Psoas muscle (tissue), 8 donors: ENCODE measurements at regions of chr1 and their contacts with region 1.

Region 1: DNA sequence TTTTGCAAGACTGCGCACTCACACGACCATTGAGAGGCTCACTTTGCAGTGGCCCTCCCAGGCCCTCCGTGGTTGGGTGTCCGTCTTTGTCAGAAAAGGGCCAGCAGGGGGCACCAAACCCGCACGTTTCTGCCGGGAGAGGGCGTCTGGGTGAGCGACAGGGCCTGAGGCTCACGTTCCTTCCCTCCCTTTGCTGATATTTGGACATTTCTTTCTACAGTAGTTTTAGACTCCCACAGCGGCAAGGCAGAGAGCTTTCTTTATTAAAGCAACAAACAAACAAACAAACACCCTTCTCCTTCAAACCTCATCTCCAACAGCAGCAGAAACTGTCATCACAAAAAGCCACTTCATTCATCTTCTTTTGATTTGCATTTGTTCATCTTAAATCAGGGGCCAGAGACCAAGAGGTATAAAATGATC is 79.2 kb upstream of the WDR26 start:
- DNase-seq: peak; percentile 85 to 91
- ATAC-seq: peak; percentile 92 to 100 (median 96)
- H3K4me3 ChIP-seq: no peak overlapping the region
- H3K27ac ChIP-seq: no peak overlapping the region
- H3K4me1 ChIP-seq: peaks cover 6% of the 10 kb centered on the region
- H3K27me3 ChIP-seq: no peaks in the 10 kb centered on the region
- CTCF ChIP-seq: peak; percentile 92

Region 2: DNA sequence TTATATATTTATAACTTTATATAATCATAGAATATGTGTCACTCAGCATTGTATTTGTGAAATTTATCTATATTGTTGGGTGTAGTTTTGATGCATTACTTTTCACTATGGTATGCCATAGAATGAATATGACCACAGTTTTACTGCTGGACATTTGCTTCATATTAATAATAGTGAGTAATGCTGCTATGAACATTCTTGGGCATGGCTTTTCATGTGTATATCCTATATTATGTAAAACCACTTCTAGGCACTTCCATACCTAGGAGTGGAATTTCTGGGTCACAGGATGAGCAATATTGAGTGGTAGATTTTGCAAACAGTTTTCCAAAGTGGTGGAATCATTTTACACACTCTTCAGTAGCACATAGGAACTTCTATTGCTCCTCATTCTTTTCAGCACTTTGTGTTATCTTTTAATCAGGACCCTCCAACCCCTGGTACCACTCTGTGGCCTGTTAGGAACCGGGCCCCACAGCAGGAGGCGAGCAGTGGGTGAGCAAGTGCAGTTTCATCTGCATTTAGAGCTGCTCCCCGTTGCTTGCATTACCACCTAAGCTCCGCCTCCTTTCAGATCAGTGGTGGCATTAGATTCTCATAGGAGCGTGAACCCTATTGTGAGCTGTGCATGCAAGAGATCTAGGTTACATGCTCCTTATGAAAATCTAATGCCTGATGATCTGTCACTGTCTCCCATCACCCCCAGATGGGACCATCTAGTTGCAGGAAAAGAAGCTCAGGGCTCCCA is 46.4 kb after region 1 on chr1:
- intact Hi-C with region 1: loop called in 1 of 2 experiments (anchors 1 kb)
- DNase-seq: no peak
- ATAC-seq: no peak
- H3K4me3 ChIP-seq: no peak overlapping the region
- H3K27ac ChIP-seq: no peak overlapping the region
- H3K4me1 ChIP-seq: peaks cover 16% of the 10 kb centered on the region
- H3K27me3 ChIP-seq: no peaks in the 10 kb centered on the region
- CTCF ChIP-seq: no peak

Region 3: GRCh38 chr1:224615861-224616755 is 102.3 kb after region 1 on chr1 and contains the start of gene CNIH3:
- intact Hi-C with region 1: loop called in 1 of 2 experiments (anchors 10 kb)
- DNase-seq: peak; percentile 29 to 70
- ATAC-seq: peak; percentile 73 to 94 (median 90)
- H3K4me3 ChIP-seq: peak within 1 kb of the TSS; percentile 78
- H3K27ac ChIP-seq: no peak within 1 kb of the TSS
- H3K4me1 ChIP-seq: peaks cover 10% of the 10 kb centered on the region
- H3K27me3 ChIP-seq: peaks cover 0 to 49% (median 13%) of the 10 kb centered on the region in 3 donors
- CTCF ChIP-seq: no peak
- total RNA-seq, gene CNIH3: 0.46 to 1.9 (median 1.3) TPM

Region 4: GRCh38 chr1:224632381-224632871 is 118.6 kb after region 1 on chr1:
- intact Hi-C with region 1: no loop called
- DNase-seq: no peak
- ATAC-seq: no peak
- H3K4me3 ChIP-seq: no peak overlapping the region
- H3K27ac ChIP-seq: no peak overlapping the region
- H3K4me1 ChIP-seq: no peaks in the 10 kb centered on the region
- H3K27me3 ChIP-seq: no peaks in the 10 kb centered on the region
- CTCF ChIP-seq: no peak

Region 5: GRCh38 chr1:224644553-224645154 is 130.9 kb after region 1 on chr1:
- intact Hi-C with region 1: loop called (anchors 2 to 10 kb)
- DNase-seq: no peak
- ATAC-seq: peak; percentile 55 to 86 (median 68)
- H3K4me3 ChIP-seq: no peak overlapping the region
- H3K27ac ChIP-seq: no peak overlapping the region
- H3K4me1 ChIP-seq: no peaks in the 10 kb centered on the region
- H3K27me3 ChIP-seq: no peaks in the 10 kb centered on the region
- CTCF ChIP-seq: peak; percentile 84

Region 6: DNA sequence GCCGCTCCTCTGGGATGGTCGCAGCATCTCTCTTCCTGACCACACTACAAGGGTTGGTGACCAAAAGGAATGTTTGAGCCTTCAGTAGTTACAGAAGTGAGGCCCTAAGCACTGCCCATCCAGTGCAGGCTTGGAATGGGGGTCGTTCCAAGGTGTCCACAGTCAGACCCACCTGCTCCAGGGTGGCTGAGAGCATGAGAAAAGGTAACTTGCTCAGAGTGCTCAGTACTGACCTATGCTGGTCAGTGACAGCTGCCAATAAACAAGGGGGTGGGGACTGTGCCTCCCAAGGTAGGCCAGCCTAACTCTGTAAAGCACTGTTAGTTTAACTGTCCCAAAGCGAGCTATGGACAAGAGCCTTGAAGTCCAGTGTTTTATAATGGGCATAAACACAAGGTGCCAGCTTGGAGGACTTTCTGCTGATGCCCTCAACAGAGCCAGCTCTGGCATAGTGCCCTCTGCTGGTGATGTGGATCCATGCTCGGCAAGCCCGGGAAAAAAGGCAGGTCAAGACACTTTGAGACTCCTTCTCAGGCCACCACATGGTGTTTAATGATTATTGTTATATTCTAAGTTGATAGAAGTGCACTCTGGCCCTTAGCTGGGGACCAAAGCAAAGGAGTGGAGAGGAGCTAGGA is 337.5 kb after region 1 on chr1:
- intact Hi-C with region 1: loop called (anchors 2 kb)
- DNase-seq: peak; percentile 39 to 73
- ATAC-seq: peak; percentile 71 to 83 (median 73)
- H3K4me3 ChIP-seq: no peak overlapping the region
- H3K27ac ChIP-seq: no peak overlapping the region
- H3K4me1 ChIP-seq: no peaks in the 10 kb centered on the region
- H3K27me3 ChIP-seq: no peaks in the 10 kb centered on the region
- CTCF ChIP-seq: peak; percentile 48

Region 7: DNA sequence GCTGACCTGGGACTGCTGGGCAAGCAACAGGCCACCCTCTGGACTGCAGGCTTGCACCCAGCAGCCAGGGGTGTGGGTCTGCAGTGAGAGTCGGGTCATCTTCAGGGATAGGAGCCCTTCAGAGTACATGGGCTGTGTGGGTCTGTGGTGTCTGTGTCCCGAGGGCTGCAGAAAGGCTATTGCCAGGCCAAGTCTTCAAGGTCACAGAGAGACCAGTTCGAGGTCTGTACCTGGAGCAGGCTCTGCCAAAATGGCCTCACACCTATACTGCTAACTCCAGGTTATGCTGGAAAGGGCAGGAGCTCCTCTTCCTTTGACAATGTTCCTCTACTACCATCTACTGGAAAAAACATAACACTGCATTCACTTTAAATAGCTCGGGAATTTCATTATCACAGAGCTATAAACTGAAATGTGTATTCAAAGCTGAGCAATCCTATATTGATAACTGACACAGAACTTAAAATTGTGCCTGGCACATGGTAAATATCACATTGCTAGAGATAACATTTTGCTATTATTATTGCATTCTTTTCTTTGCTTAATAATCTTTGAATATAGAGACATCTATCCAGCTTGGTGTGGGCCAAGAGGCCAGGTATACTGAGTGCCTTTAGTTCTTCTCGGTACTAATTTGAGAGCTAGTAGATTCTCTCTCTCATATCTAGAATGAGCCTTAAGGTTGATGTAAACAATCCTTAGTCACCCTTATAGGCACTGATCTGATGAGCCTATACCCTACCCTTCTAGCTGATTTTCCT is 408.8 kb after region 1 on chr1:
- intact Hi-C with region 1: loop called (anchors 1 to 5 kb)
- DNase-seq: no peak
- ATAC-seq: peak; percentile 54 to 76 (median 70)
- H3K4me3 ChIP-seq: no peak overlapping the region
- H3K27ac ChIP-seq: no peak overlapping the region
- H3K4me1 ChIP-seq: no peaks in the 10 kb centered on the region
- H3K27me3 ChIP-seq: no peaks in the 10 kb centered on the region
- CTCF ChIP-seq: peak; percentile 70